ENCODE measurements at regions of chr5 and their contacts with region 1.

Region 1: DNA sequence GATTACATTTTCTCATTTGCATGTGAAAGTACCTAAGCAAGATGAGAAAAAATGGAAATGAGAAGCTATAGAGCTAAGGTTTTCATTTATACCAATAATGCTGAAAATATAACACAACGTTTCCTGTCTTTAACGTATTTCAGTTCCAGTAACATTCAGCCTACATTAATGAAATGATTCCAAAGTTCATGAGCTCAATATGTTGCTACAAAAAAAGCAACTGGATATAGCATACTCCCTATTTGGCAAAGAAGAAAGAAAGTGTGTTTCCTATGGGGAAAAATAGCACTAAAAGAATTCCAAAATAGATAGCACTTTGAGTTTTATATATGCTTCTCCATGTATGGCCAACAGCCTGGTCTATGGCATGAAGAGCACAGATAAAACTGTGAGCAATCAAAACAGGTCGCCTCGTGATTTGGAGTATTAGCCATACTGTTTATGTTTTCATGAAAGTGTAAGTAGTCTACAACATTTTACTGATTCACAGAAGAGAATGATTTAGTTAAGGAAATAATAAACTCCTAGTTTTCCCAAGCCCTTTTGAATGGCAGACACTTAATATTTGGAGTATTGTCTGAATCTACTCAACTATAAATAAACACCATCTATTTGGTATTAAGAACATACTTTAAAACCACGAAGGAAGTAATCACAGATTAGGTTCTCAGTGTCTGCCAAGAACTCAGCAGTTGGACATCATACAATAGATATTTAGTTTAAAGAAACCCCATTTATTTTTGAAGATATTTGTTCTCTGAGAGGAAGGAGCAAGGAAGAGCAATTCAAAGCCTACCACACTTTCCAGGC is 258.7 kb upstream of the RASA1 start:
- DNase-seq: no peak
- ATAC-seq: no peak
- H3K4me3 Mint-ChIP-seq: no peak overlapping the region
- H3K27ac Mint-ChIP-seq: no peak overlapping the region
- H3K4me1 Mint-ChIP-seq: no peaks in the 10 kb centered on the region
- H3K27me3 Mint-ChIP-seq: no peaks in the 10 kb centered on the region
- CTCF ChIP-seq: no peak

Region 2: DNA sequence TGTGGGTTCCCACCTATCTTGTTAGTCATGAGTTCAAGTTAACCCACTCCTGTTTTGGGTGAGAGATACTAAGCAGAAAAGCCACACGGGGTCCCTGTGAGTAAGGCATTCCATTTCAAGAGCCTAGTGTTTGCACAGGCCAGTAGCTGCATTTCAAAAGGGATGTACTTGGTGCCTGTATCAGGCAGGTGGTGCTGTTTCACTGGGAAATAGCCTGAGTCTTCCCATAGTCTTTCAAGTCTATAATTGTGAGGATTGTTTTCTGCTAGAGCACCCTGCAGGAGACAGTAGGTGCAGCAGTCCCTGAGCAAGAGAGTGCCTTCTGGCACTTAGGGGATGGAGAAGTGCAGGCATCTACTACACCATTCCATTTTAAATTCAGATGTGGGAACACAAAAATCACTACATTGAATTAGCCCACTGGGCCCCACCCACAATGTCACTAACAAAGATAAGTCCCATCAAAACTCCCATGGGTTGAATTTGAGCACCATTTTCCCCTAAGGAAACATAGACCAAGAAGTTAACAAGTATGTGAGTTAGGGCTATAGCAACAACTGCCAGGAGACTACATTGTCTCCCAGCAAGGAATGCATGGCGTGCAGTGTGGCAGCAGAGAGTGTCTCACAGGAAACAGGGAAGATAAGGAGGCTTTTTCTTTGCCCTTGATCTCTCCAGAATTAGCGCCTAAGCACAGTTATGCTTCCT is 128.0 kb before region 1 on chr5:
- CTCF ChIA-PET with region 1: interaction called, 3 read pairs
- POLR2A ChIA-PET with region 1: no interaction called
- intact Hi-C with region 1: loop called (anchors 1 kb)
- DNase-seq: no peak
- ATAC-seq: peak; percentile 60
- H3K4me3 Mint-ChIP-seq: no peak overlapping the region
- H3K27ac Mint-ChIP-seq: no peak overlapping the region
- H3K4me1 Mint-ChIP-seq: no peaks in the 10 kb centered on the region
- H3K27me3 Mint-ChIP-seq: peaks cover 2% of the 10 kb centered on the region
- CTCF ChIP-seq: no peak

Region 3: GRCh38 chr5:87127426-87127825 is 118.5 kb after region 1 on chr5:
- CTCF ChIA-PET with region 1: no interaction called
- POLR2A ChIA-PET with region 1: no interaction called
- intact Hi-C with region 1: no loop called
- DNase-seq: no peak
- ATAC-seq: no peak
- H3K4me3 Mint-ChIP-seq: no peak overlapping the region
- H3K27ac Mint-ChIP-seq: no peak overlapping the region
- H3K4me1 Mint-ChIP-seq: peaks cover 15% of the 10 kb centered on the region
- H3K27me3 Mint-ChIP-seq: no peaks in the 10 kb centered on the region
- CTCF ChIP-seq: no peak

Measured in activated B cell treated with CpG ODN at 0.5 μM for 24 hours (primary cell).